HEK293 (cell line): ENCODE measurements at regions of chr6 and their contacts with region 1.

Region 1: DNA sequence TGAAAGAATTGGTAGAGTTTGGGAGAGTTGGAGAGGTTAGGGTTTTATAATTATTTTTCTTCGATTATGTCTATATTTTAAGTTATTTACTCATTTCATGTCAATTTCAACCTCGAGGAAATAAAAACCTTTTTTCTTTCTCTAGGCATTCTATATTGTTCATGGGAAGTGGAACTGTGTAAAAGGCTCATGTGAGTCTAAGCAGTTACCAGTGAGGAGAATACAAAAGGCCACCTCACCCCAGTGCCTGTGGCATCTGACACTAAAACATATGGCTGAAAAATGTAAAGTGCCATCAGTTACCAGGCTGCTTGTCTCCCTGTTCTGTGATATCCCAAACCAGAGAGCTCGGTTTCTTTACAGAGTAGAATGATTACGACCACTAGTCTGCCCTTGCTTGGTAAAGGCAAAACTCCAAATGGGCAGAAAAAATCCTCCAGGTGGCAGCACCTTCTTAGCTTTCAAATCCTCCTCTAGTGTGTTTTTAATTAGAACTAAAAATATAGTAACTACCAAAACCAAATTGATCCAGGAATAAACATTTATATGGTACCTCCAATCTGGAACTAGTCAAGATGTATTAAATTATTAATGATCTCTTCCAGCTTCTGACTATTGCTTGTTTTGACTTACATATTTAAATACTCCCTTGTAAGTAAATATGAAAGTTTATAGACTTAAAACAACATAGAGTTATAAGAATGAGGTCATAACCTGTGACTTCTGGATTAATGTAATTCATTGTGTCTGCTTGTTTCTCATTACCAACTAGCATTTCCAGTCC is 122.6 kb upstream of the MCHR2 start:
- H3K4me3 ChIP-seq: no peak overlapping the region
- H3K27ac ChIP-seq: no peak overlapping the region
- H3K4me1 ChIP-seq: no peaks in the 10 kb centered on the region
- CTCF ChIP-seq: no peak; the same call in 1 of the 2 replicates

Region 2: DNA sequence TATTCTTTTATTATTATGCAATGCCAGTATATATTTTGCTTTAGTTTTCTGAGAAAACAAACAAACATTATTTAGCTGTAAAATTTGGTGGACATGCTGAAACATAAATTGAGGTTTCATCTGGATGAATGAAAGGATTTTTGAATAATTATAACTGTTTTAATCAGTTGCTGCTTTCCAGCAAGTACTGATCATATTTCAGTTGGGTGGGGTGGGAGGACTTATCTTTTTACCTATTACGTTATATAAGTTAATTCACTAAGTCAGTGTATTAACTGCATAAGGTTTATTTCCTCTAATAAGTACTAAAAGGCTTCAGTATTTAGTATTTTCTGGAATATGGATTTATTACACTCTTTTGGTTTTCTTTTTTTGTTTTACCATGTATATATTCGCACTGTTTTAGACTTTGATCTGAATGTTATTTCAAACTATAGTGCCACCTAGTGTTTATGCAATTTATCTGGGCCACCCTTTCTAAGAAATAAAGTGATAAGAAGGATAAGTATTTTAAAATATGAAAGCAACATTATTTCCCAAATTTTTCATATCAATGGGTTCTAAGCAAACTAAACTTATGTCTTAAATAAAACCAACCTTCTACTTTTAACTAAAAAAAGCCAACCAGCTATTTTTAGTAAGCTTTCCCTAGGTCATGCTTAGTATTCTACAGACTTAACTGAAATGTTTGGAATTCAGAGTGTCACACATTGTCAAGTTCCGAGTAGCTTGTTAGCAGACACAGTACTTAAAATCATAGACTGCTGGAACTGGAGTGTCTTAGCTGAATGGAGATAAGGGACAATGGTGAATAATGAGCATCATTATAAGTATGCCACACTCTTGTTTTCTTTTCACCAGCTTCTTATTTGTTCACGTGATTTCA is 17.2 kb before region 1 on chr6:
- CTCF ChIA-PET with region 1: interaction called, 21 read pairs
- POLR2A ChIA-PET with region 1: no interaction called
- H3K4me3 ChIP-seq: no peak overlapping the region
- H3K27ac ChIP-seq: no peak overlapping the region
- H3K4me1 ChIP-seq: no peaks in the 10 kb centered on the region
- CTCF ChIP-seq: no peak

Region 3: DNA sequence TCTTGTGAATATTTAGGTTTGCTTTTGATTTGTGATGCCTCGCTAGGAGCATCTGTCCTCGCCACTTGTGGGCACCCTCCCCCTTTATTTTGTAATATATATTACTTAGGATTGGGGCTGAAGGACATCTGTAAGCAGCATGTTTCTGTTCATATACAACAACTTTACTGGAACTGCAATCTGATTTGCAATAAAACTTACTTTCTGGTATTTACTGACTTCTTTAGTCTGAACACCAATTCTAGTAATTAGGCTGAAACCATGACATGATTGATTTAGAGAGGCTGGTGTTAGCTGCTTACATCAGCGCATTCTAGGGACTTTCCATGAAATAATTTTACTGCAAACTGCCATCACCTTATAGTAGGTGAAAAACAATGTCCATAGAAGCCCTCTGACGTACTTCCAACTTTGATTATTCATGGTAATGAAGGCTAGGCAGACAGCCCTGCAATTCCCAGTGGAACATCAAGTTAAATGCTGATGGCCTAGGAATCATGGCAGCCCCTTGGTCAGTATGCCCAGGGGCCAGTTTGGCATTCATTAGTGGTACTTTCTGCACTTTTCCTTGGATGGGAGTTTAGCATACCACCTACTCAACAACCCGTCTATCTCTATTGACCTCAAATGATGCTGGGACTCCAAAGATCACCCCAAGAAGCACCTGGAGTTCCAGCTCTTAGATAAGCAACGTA is 10.3 kb after region 1 on chr6:
- CTCF ChIA-PET with region 1: interaction called, 15 read pairs
- POLR2A ChIA-PET with region 1: no interaction called
- H3K4me3 ChIP-seq: no peak overlapping the region
- H3K27ac ChIP-seq: no peak overlapping the region
- H3K4me1 ChIP-seq: no peaks in the 10 kb centered on the region
- CTCF ChIP-seq: no peak

Region 4: GRCh38 chr6:100472674-100473073 is 356.1 kb after region 1 on chr6:
- CTCF ChIA-PET with region 1: interaction called, 73 read pairs
- POLR2A ChIA-PET with region 1: no interaction called
- H3K4me3 ChIP-seq: no peak overlapping the region
- H3K27ac ChIP-seq: no peak overlapping the region
- H3K4me1 ChIP-seq: peaks cover 2% of the 10 kb centered on the region; the same call in 1 of the 2 replicates
- CTCF ChIP-seq: no peak

Region 5: GRCh38 chr6:100573167-100573566 is 456.6 kb after region 1 on chr6:
- CTCF ChIA-PET with region 1: interaction called, 10 read pairs
- POLR2A ChIA-PET with region 1: no interaction called
- H3K4me3 ChIP-seq: no peak overlapping the region
- H3K27ac ChIP-seq: no peak overlapping the region
- H3K4me1 ChIP-seq: no peaks in the 10 kb centered on the region
- CTCF ChIP-seq: no peak

Region 6: GRCh38 chr6:100664274-100665040 is 547.9 kb after region 1 on chr6:
- CTCF ChIA-PET with region 1: interaction called, 44 read pairs
- POLR2A ChIA-PET with region 1: no interaction called
- H3K4me3 ChIP-seq: no peak overlapping the region
- H3K27ac ChIP-seq: no peak overlapping the region
- H3K4me1 ChIP-seq: no peaks in the 10 kb centered on the region
- CTCF ChIP-seq: no peak